AG04450 (cell line): ENCODE measurements at regions of chr10 and their contacts with region 1.

Region 1: GRCh38 chr10:112721080-112721698 is 228.9 kb upstream of the TCF7L2 start:
- DNase-seq: no peak
- H3K4me3 ChIP-seq: no peak overlapping the region
- H3K27ac ChIP-seq: no peak overlapping the region
- H3K27me3 ChIP-seq: no peaks in the 10 kb centered on the region
- CTCF ChIP-seq: peak; percentile 73

Region 2: DNA sequence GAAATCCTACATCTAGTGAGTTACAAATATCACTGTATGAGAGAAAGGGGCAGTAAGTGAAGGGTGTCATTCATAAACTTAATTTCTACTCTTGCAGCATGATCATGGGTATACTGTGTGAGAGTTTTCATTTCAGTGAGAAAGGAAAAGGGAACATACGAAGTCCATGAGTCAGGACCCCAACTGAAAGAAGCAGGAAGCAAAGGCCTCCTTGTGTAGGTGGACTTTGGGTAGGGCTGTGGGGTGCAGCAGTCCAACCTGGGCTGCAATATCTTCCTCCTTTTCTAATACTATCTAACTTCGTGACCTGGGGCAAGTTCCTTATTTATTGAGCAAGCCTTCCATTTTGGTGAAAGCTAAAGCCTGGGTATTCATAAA is 19.3 kb before region 1 on chr10:
- CTCF ChIA-PET with region 1: interaction called, 18 read pairs
- POLR2A ChIA-PET with region 1: no interaction called
- DNase-seq: no peak
- H3K4me3 ChIP-seq: no peak overlapping the region
- H3K27ac ChIP-seq: no peak overlapping the region
- H3K27me3 ChIP-seq: no peaks in the 10 kb centered on the region
- CTCF ChIP-seq: no peak

Region 3: GRCh38 chr10:112753961-112754411 is 32.8 kb after region 1 on chr10:
- CTCF ChIA-PET with region 1: interaction called, 10 read pairs
- POLR2A ChIA-PET with region 1: no interaction called
- DNase-seq: no peak
- H3K4me3 ChIP-seq: no peak overlapping the region
- H3K27ac ChIP-seq: peak overlapping the region; percentile 52
- H3K27me3 ChIP-seq: no peaks in the 10 kb centered on the region
- CTCF ChIP-seq: no peak